Breast epithelium (tissue), 4 donors: ENCODE measurements at regions of chr12 and their contacts with region 1.

Region 1: GRCh38 chr12:13905809-13906208 is 75.6 kb downstream of the GRIN2B start:
- DNase-seq: no peak
- H3K4me3 ChIP-seq: no peak overlapping the region
- H3K27ac ChIP-seq: no peak overlapping the region
- H3K4me1 ChIP-seq: no peaks in the 10 kb centered on the region
- H3K27me3 ChIP-seq: no peaks in the 10 kb centered on the region
- CTCF ChIP-seq: no peak
- POLR2A ChIP-seq: no peak

Region 2: DNA sequence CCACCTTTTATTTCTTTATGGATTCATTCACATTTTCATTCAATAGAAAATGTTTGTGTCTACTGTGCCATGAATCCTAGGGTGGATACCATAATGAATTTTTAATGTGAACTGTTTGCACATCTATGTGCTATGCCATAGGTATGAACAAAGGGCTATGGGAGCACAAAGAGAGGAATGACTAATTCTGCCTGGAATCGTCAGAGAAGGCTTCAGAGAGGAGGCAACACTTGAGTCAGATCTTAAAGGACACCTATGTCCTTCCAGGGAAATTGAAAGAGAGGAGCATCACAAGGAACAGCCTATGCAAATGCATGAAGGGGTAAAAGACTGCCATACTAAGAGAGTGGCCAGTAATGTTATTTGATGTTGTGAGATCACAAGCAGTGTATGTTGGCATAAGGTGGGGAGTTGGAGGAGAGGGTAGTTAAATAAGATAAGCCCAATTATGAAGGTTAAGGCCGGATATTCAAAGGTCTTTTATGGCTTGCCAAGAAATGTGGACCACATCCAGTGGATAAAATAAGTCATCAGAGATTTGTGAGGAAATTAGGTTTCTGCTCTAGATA is 171.1 kb before region 1 on chr12:
- intact Hi-C with region 1: loop called (anchors 5 kb)
- DNase-seq: no peak
- H3K4me3 ChIP-seq: no peak overlapping the region
- H3K27ac ChIP-seq: no peak overlapping the region
- H3K4me1 ChIP-seq: no peaks in the 10 kb centered on the region
- H3K27me3 ChIP-seq: no peaks in the 10 kb centered on the region
- CTCF ChIP-seq: no peak
- POLR2A ChIP-seq: no peak

Region 3: DNA sequence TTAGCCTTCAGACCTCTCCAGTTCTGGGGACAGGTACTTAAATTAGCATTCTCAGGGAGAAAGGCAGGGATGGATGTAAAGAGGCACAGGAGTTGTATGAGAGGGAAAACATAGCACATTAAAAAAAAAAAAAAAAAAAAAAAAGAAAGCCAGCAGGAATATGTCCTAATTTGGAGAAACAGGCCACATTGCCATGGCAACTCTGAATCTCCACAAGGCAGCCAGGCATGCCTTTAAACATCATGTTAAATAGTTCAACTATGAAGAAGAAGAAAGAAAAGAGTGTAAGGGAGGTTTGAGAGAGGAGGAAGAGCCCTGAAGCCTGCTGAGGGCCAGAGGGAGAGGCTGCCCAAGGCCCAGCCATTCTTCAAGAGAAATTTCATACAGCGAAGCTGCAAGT is 70.2 kb before region 1 on chr12:
- intact Hi-C with region 1: no loop called
- DNase-seq: no peak
- H3K4me3 ChIP-seq: no peak overlapping the region
- H3K27ac ChIP-seq: no peak overlapping the region
- H3K4me1 ChIP-seq: no peaks in the 10 kb centered on the region
- H3K27me3 ChIP-seq: no peaks in the 10 kb centered on the region
- CTCF ChIP-seq: no peak
- POLR2A ChIP-seq: no peak

Region 4: GRCh38 chr12:14167005-14167628 is 261.3 kb after region 1 on chr12:
- intact Hi-C with region 1: no loop called
- DNase-seq: no peak
- H3K4me3 ChIP-seq: no peak overlapping the region
- H3K27ac ChIP-seq: no peak overlapping the region
- H3K4me1 ChIP-seq: no peaks in the 10 kb centered on the region
- H3K27me3 ChIP-seq: no peaks in the 10 kb centered on the region
- CTCF ChIP-seq: peak; percentile 60 to 82 (median 67)
- POLR2A ChIP-seq: no peak